HepG2 (cell line): ENCODE measurements at regions of chr2 and their contacts with region 1.

Region 1: DNA sequence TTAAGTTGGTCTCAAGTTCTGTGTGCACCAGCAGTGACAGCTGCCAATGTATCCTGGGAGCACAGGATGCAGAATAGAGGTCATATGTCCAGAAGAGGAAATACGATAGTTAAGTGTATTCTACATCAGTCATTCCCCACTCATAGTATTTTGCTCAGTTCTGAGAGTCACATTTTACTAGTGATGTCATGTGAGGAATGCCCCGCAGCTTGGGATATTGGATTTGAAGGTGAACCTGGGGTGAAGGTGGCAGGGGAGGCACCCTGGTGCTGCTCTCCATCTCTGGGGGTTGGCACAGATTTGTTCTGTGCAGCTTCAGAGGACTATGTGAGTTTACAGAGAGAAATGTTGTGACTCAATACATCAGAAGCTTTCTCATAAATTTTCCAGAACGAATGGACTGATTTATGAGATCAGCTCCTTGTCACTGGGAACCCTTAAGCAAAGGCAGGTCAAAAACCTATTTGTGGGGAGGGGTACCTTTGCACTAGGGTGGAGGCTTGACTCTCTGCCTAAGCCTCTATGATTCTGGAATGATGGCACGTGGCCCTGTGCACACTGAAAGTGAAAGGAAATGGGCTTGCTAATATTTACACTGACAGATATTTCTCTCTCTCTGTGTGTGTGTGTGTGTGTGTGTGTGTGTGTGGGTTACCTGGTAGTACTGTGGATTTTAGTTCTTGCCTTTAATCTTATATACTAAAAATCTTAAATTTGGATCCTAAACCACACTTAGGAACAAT is 95.9 kb downstream of the NEB start:
- DNase-seq: peak; percentile 76
- ATAC-seq: peak; percentile 87
- H3K4me3 ChIP-seq: peak overlapping the region in 2 of 3 experiments; percentile 13 to 29; a peak in 3 of 6 replicates
- H3K27ac ChIP-seq: no peak overlapping the region
- H3K4me1 ChIP-seq: peaks cover 47% of the 10 kb centered on the region
- H3K27me3 ChIP-seq: no peaks in the 10 kb centered on the region
- CTCF ChIP-seq: no peak
- EP300 ChIP-seq: no peak
- POLR2A ChIP-seq: no peak
- RAD21 ChIP-seq: no peak

Region 2: GRCh38 chr2:151760139-151760650 is 121.8 kb after region 1 on chr2:
- CTCF ChIA-PET with region 1: no interaction called
- POLR2A ChIA-PET with region 1: no interaction called
- in situ Hi-C with region 1: no loop called
- intact Hi-C with region 1: loop called (anchors 10 kb)
- DNase-seq: peak; percentile 79
- ATAC-seq: peak; percentile 99
- H3K4me3 ChIP-seq: peak overlapping the region in 1 of 3 experiments; percentile 44; a peak in 2 of 6 replicates
- H3K27ac ChIP-seq: peak overlapping the region; percentile 30
- H3K4me1 ChIP-seq: peaks cover 62% of the 10 kb centered on the region
- H3K27me3 ChIP-seq: no peaks in the 10 kb centered on the region
- CTCF ChIP-seq: peak; percentile 55
- EP300 ChIP-seq: peak in 1 of 2 experiments; percentile 50; a peak in 1 of 4 replicates
- POLR2A ChIP-seq: 0 out of 4 replicates have a peak, but pooled peaks of 1 of the 2 experiments have one; percentile 23
- RAD21 ChIP-seq: peak; percentile 43; the same call in 1 of the 2 replicates

Region 3: DNA sequence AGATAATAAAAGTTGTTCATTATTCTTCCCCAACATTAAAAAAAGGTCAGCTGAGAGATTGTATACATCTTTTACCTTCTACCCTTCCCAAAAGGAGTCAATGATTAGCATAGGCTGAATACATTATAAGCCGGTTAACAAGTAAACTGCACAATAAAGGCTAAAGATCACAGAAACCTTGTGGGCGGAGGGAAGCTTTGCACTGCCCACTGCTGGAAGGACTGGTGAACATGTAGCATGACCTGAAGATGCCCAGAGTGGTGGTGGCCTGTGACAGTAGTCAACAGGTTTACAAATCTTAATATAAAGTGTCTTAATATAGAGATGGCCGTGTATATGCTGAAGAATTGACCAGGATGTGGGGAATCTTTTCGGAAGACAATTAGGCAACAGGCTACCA is 154.2 kb after region 1 on chr2:
- CTCF ChIA-PET with region 1: no interaction called
- POLR2A ChIA-PET with region 1: no interaction called
- in situ Hi-C with region 1: no loop called
- intact Hi-C with region 1: loop called (anchors 5 kb)
- DNase-seq: peak; percentile 32
- ATAC-seq: peak; percentile 87
- H3K4me3 ChIP-seq: no peak overlapping the region
- H3K27ac ChIP-seq: no peak overlapping the region
- H3K4me1 ChIP-seq: no peaks in the 10 kb centered on the region
- H3K27me3 ChIP-seq: no peaks in the 10 kb centered on the region
- CTCF ChIP-seq: peak; percentile 66
- EP300 ChIP-seq: no peak
- POLR2A ChIP-seq: no peak
- RAD21 ChIP-seq: 0 out of 2 replicates have a peak, but pooled peaks have one; percentile 25

Region 4: DNA sequence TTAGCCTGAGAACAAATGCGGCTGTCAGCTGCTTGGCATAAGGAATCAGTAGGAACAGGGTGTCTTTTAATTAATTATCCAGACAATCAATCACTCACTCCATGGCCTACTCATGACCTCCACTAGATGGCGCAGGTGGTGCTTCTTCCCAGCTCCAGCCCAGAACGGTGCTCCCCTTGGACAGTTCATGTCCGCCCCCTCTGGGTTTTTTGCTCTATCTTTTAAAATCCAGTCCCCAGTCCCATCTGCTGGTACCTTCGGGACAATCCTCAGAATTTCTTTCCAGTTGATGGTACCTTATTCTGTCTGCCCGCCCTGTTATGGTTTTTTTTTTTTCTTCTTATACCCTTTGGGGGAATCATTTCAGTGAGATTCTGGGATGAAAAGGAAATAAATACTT is 360.7 kb after region 1 on chr2:
- CTCF ChIA-PET with region 1: no interaction called
- POLR2A ChIA-PET with region 1: no interaction called
- in situ Hi-C with region 1: loop called (anchors 25 kb)
- intact Hi-C with region 1: loop called (anchors 5 kb)
- DNase-seq: peak; percentile 77
- ATAC-seq: peak; percentile 64
- H3K4me3 ChIP-seq: no peak overlapping the region
- H3K27ac ChIP-seq: no peak overlapping the region
- H3K4me1 ChIP-seq: peaks cover 55% of the 10 kb centered on the region
- H3K27me3 ChIP-seq: no peaks in the 10 kb centered on the region
- CTCF ChIP-seq: peak; percentile 85
- EP300 ChIP-seq: no peak
- POLR2A ChIP-seq: no peak
- RAD21 ChIP-seq: peak; percentile 86

Region 5: GRCh38 chr2:152012697-152013096 is 374.3 kb after region 1 on chr2:
- CTCF ChIA-PET with region 1: no interaction called
- POLR2A ChIA-PET with region 1: no interaction called
- in situ Hi-C with region 1: loop called (anchors 25 kb)
- intact Hi-C with region 1: loop called (anchors 5 kb)
- DNase-seq: no peak
- ATAC-seq: no peak
- H3K4me3 ChIP-seq: no peak overlapping the region
- H3K27ac ChIP-seq: no peak overlapping the region
- H3K4me1 ChIP-seq: peaks cover 40% of the 10 kb centered on the region
- H3K27me3 ChIP-seq: no peaks in the 10 kb centered on the region
- CTCF ChIP-seq: no peak
- EP300 ChIP-seq: no peak
- POLR2A ChIP-seq: no peak
- RAD21 ChIP-seq: no peak